ENCODE measurements at regions of chr7 and their contacts with region 1.

Region 1: GRCh38 chr7:44606450-44607254 is at the start of gene OGDH:
- DNase-seq: peak; percentile 98 to 99 (median 99)
- H3K4me3 ChIP-seq: peak within 1 kb of the TSS; percentile 63 to 87 (median 82)
- H3K4me3 Mint-ChIP-seq: peak within 1 kb of the TSS; percentile 84 to 97
- H3K27ac ChIP-seq: peak within 1 kb of the TSS; percentile 90 to 96
- H3K27ac Mint-ChIP-seq: peak within 1 kb of the TSS; percentile 98 to 100 (median 99)
- H3K4me1 ChIP-seq: peaks cover 33 to 42% of the 10 kb centered on the region in 2 donors
- H3K4me1 Mint-ChIP-seq: peaks cover 40% of the 10 kb centered on the region
- H3K27me3 ChIP-seq: peaks cover 0 to 8% of the 10 kb centered on the region in 2 donors
- H3K27me3 Mint-ChIP-seq: peaks cover 3 to 8% (median 5%) of the 10 kb centered on the region in 3 donors
- CTCF ChIP-seq: no peak
- polyA plus RNA-seq, gene OGDH: 41.0 to 74.1 (median 49.9) TPM

Region 2: DNA sequence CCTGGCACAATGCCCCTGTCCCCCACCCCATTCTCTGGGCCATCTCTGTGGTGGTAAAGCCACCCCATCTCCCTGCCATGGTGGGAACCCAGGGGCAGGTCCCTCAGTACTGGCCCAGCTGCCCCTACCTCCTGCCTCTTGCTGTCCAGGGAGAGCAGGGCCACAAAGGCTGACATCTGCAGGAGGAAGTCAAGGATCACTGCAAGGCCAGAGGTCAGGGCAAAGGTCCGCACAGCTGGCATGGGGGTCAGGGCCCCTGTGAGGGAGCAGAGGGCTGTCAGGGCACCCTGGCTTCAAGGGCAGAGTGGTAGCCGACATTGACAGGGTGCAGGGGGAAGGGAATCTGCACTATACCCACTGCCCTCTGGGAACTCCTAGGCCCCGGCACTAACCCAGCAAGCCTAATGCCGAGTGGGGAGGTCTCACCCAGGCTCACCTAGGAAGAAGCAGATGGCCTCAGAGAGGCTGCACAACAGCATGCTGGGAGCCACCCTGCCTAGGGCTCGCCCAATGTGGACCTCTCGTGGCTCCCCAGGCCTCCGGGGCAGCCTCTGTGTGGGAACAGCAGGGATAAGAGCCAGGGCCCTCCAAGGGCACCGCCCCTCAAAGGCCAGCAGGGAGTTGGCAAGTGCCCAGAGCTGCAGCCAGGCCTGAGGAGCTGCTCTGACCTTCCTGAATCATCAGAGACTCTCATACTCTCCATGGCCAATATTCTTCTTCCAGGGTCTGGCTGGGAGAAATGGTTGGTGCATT is 73.2 kb before region 1 on chr7:
- intact Hi-C with region 1: no loop called
- DNase-seq: no peak
- H3K4me3 ChIP-seq: no peak overlapping the region
- H3K4me3 Mint-ChIP-seq: no peak overlapping the region
- H3K27ac ChIP-seq: no peak overlapping the region
- H3K27ac Mint-ChIP-seq: no peak overlapping the region
- H3K4me1 ChIP-seq: no peaks in the 10 kb centered on the region
- H3K4me1 Mint-ChIP-seq: no peaks in the 10 kb centered on the region
- H3K27me3 ChIP-seq: no peaks in the 10 kb centered on the region
- H3K27me3 Mint-ChIP-seq: peaks cover 2 to 6% (median 5%) of the 10 kb centered on the region in 3 donors
- CTCF ChIP-seq: no peak

Region 3: DNA sequence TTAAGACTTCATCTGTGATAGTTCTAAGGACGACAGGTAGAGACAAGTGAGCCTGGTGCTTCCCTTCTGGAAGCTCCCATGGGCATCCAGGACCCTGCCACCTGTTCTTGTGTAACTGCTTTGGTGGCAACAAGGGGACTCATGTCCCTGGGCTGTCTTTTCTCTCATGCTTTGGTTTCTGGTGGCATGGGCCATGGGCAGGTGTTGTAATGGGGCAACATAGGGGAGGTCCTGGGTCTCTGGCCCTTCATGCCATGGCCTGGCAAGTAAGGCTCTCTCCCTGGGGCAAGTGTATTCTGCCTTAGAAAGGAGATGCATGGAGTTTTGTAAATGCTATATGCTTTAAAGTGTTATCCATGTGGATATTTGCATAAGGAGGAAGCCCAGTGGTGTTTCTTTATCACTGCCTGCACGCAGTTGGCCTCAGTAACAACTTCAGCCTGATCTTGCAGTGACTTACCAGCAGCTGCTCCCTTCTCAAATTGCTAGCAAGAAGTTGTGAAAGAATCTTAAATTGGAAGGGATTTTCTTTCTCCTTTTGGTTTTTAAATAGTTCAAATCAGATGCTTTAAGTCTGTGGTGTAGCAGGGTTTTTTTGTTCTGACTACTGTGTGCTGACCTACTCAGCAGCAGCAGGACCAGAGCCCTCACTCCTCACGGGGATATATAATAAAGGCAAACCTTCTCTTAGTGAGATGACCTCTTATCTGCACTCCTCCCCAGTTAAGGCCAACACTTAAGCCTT is 39.7 kb after region 1 on chr7:
- intact Hi-C with region 1: loop called (anchors 5 kb)
- DNase-seq: no peak
- H3K4me3 ChIP-seq: no peak overlapping the region
- H3K4me3 Mint-ChIP-seq: no peak overlapping the region
- H3K27ac ChIP-seq: peak overlapping the region in 1 of 2 donors; percentile 67
- H3K27ac Mint-ChIP-seq: peak overlapping the region in 6 of 7 donors; percentile 65 to 84 (median 76)
- H3K4me1 ChIP-seq: no peaks in the 10 kb centered on the region
- H3K4me1 Mint-ChIP-seq: peaks cover 9% of the 10 kb centered on the region
- H3K27me3 ChIP-seq: no peaks in the 10 kb centered on the region
- H3K27me3 Mint-ChIP-seq: no peaks in the 10 kb centered on the region
- CTCF ChIP-seq: no peak